Heart right ventricle (tissue), 16 donors: ENCODE measurements at regions of chr3 and their contacts with region 1.

Region 1: DNA sequence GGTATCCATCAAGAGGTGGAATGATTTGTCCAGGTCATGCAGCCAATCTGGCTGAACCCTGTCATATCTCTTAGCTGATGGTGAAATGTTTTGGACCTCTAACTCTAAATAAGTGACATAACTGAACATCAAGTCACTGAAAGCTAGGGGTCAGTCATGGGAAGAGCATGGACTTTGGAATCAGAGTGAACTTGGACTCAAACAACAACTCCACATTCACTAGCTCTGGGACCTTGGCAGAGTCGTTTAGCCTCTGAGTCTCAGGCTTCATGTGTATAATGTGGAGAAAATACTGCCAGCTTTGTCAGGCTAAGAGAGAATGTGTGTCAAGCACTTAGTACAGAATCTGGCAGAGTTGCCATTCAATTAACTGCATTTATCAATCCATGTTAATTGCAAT is 557.8 kb upstream of the CFAP20DC start:
- DNase-seq: no peak
- ATAC-seq: peak in 6 of 8 donors; percentile 13 to 60 (median 38)
- H3K4me3 ChIP-seq: no peak overlapping the region
- H3K27ac ChIP-seq: peak overlapping the region in 3 of 10 donors; percentile 24 to 77 (median 49)
- H3K4me1 ChIP-seq: peaks cover 0 to 23% (median 11%) of the 10 kb centered on the region in 9 donors
- H3K27me3 ChIP-seq: no peaks in the 10 kb centered on the region
- CTCF ChIP-seq: peak in 6 of 9 donors; percentile 10 to 39 (median 27)

Region 2: DNA sequence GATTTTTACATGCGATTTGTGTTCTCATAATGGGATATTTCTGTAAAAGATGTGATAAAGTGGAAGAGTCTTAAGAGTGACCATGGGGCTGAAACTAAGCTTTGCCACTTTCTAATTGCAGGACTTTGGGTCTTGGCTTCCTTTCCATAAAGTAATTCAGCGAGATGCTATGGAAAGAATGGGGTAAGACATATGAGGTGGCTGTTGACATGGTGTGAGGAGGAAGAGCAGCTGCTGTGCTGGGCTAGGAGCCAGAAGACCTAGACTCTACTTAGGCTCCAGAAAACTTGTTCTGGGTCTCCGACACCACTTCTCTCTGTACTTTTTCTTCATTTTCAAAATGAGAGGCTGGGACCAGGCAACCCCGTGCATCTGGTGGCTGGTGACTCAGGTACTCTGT is 96.6 kb after region 1 on chr3:
- intact Hi-C with region 1: loop called in 2 of 10 experiments (anchors 5 kb)
- DNase-seq: no peak
- ATAC-seq: no peak
- H3K4me3 ChIP-seq: no peak overlapping the region
- H3K27ac ChIP-seq: no peak overlapping the region
- H3K4me1 ChIP-seq: peaks cover 0 to 2% (median 0%) of the 10 kb centered on the region in 9 donors
- H3K27me3 ChIP-seq: no peaks in the 10 kb centered on the region
- CTCF ChIP-seq: no peak

Region 3: DNA sequence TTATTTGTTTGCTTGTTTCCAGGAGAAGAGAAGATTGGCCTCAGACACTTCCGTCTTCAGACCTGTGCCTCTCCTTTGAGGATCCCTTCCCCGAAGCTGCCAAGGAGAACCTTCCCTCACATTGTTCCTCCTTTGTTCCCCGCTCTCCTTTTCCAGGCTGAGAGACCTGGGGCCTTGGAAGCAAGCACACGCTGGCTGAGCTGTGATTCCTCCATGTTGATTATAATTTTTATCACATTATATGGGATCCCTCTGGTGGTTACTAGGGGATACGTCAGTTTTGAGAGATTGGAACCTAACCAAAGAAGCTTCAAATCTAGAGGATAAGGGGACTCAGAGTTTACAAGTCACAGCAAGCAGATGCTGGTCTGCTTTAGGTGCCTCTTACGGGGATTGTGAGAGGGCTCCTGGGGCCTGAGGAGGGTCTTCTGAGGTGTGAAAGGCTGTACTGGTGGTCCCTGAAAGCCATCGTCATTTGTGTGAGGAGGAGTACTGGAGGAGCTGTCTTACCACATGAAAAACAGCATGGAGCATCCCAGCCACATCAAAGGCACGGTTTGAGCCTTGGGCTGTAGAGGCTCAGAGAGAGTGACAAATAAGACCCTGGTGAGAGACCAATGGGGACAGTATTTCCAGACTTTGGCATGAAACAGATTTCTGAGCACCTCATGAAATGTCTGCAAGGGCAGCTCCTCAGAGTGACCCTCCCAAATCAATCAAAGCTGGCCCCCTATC is 202.2 kb after region 1 on chr3:
- intact Hi-C with region 1: loop called in 1 of 10 experiments (anchors 10 kb)
- DNase-seq: no peak
- ATAC-seq: peak in 2 of 8 donors; percentile 32 to 58
- H3K4me3 ChIP-seq: no peak overlapping the region
- H3K27ac ChIP-seq: no peak overlapping the region
- H3K4me1 ChIP-seq: peaks cover 0 to 17% (median 7%) of the 10 kb centered on the region in 9 donors
- H3K27me3 ChIP-seq: no peaks in the 10 kb centered on the region
- CTCF ChIP-seq: peak in 7 of 9 donors; percentile 28 to 46 (median 41)